ENCODE measurements at regions of chr2 and their contacts with region 1.

Region 1: GRCh38 chr2:152189622-152190495 is 14.3 kb upstream of the STAM2 start:
- DNase-seq: peak; percentile 35
- H3K4me3 ChIP-seq: no peak overlapping the region
- H3K27ac ChIP-seq: no peak overlapping the region
- H3K4me1 ChIP-seq: no peaks in the 10 kb centered on the region
- H3K27me3 ChIP-seq: no peaks in the 10 kb centered on the region
- CTCF ChIP-seq: peak; percentile 67 to 87 (median 76)
- EP300 ChIP-seq: no peak
- POLR2A ChIP-seq: no peak

Region 2: DNA sequence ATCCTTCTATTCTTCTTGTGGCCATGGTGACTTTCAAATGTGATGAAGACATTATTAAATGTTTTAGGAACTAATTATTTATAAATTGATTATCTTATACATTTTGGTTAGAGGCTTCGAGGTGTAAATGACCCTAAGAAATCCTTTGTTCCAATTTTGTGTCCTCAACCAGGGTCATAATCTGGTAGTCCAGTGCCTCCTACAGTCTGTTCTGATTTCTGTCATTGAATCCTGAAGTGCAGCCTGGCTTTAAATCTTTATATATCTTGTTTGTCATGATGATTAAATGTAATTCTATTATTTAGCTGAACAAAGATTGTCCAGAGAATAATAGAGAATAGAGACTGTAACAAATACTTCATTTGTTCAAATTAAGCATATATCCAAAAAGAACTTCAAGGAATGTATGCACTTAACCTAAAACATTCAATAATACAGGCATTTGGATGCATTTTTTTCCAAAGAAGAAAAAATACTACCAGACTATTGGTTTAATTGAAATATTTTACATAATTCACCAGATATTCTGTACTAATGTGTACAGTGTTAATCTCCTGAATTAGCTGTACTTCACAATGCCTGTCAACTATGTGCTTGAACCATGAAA is 437.6 kb after region 1 on chr2:
- in situ Hi-C with region 1: loop called (anchors 5 to 10 kb)
- intact Hi-C with region 1: no loop called
- DNase-seq: no peak
- H3K4me3 ChIP-seq: no peak overlapping the region
- H3K27ac ChIP-seq: no peak overlapping the region
- H3K4me1 ChIP-seq: no peaks in the 10 kb centered on the region
- H3K27me3 ChIP-seq: no peaks in the 10 kb centered on the region
- CTCF ChIP-seq: peak; percentile 45 to 60 (median 57)
- EP300 ChIP-seq: no peak
- POLR2A ChIP-seq: no peak

Measured in transverse colon (tissue), 4 donors.